ENCODE measurements at regions of chr6 and their contacts with region 1.

Region 1: GRCh38 chr6:157974341-157974894 is 7.2 kb upstream of the SYNJ2 start:
- DNase-seq: no peak
- ATAC-seq: no peak
- H3K4me3 ChIP-seq: no peak overlapping the region
- H3K27ac ChIP-seq: no peak overlapping the region
- H3K4me1 ChIP-seq: no peaks in the 10 kb centered on the region
- H3K27me3 ChIP-seq: no peaks in the 10 kb centered on the region
- CTCF ChIP-seq: no peak

Region 2: GRCh38 chr6:158072083-158072721 is 97.8 kb after region 1 on chr6:
- intact Hi-C with region 1: loop called in 1 of 3 experiments (anchors 10 kb)
- DNase-seq: peak in 5 of 6 donors; percentile 58 to 87 (median 73)
- ATAC-seq: peak; percentile 74 to 89 (median 80)
- H3K4me3 ChIP-seq: no peak overlapping the region
- H3K27ac ChIP-seq: no peak overlapping the region
- H3K4me1 ChIP-seq: no peaks in the 10 kb centered on the region
- H3K27me3 ChIP-seq: no peaks in the 10 kb centered on the region
- CTCF ChIP-seq: peak; percentile 40 to 78 (median 70)